PC-3 (cell line): ENCODE measurements at regions of chr7 and their contacts with region 1.

Region 1: DNA sequence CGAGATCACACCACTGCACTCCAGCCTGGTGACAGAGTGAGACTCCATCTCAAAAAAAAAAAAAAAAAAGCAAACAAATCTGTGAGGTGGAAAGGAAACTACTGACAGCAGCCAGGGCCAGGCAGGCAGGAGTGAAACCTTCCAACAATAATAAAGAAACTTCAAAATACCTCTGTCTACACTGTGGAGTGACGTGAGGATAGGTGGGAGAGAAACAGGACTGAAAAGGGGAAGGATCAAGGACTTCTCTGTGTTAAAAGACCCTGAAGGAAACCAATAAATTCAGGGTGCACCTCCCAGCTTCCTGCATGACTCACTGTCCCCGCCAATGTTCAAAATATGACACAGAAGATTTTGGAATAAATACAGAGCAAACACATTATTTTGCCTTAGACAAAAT is 82.9 kb downstream of the KIAA1549 start:
- DNase-seq: peak; percentile 84
- ATAC-seq: peak; percentile 65
- H3K4me3 ChIP-seq: no peak overlapping the region
- H3K27ac ChIP-seq: peak overlapping the region; percentile 99
- H3K4me1 ChIP-seq: peaks cover 74% of the 10 kb centered on the region
- H3K27me3 ChIP-seq: no peaks in the 10 kb centered on the region
- CTCF ChIP-seq: no peak

Region 2: DNA sequence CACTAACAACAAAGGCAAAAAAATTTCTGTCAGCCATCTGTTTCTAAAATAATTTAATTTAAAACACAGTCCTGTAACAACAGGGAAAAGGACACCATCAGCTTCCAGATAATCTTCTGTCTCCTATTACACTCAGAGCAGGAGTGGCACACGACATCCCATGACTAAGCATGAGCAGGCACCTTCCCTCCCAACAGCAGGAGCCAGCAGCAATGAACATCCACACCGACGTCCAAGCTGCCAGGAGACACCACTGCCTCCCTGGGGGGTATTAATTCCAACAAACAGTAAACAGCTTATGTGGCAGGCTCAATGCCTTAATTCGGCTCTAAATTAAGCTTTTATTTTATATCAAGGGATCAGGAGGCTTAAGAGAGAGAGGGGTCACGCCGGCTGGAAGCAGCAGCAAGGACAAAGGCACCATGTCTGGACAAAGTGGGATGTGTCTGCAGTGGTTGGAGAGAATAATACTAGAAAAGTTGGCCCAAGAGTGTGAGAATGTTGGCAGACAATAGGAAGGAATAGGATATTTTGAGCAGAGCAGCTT is 37.3 kb after region 1 on chr7:
- CTCF ChIA-PET with region 1: interaction called, 3 read pairs
- POLR2A ChIA-PET with region 1: interaction called, 4 read pairs
- intact Hi-C with region 1: loop called (anchors 1 kb)
- DNase-seq: peak; percentile 92
- ATAC-seq: peak; percentile 93
- H3K4me3 ChIP-seq: peak overlapping the region; percentile 49; the same call in 1 of the 2 replicates
- H3K27ac ChIP-seq: peak overlapping the region; percentile 91
- H3K4me1 ChIP-seq: peaks cover 32% of the 10 kb centered on the region
- H3K27me3 ChIP-seq: no peaks in the 10 kb centered on the region
- CTCF ChIP-seq: no peak

Region 3: GRCh38 chr7:139086454-139086853 is 188.2 kb after region 1 on chr7:
- CTCF ChIA-PET with region 1: no interaction called
- POLR2A ChIA-PET with region 1: no interaction called
- intact Hi-C with region 1: no loop called
- DNase-seq: no peak
- ATAC-seq: no peak
- H3K4me3 ChIP-seq: no peak overlapping the region
- H3K27ac ChIP-seq: no peak overlapping the region
- H3K4me1 ChIP-seq: no peaks in the 10 kb centered on the region
- H3K27me3 ChIP-seq: no peaks in the 10 kb centered on the region
- CTCF ChIP-seq: no peak